Activated CD4-positive, alpha-beta T cell treated with anti-CD3 and anti-CD28 coated beads for 36 hours (primary cell): ENCODE measurements at regions of chr7 and their contacts with region 1.

Region 1: DNA sequence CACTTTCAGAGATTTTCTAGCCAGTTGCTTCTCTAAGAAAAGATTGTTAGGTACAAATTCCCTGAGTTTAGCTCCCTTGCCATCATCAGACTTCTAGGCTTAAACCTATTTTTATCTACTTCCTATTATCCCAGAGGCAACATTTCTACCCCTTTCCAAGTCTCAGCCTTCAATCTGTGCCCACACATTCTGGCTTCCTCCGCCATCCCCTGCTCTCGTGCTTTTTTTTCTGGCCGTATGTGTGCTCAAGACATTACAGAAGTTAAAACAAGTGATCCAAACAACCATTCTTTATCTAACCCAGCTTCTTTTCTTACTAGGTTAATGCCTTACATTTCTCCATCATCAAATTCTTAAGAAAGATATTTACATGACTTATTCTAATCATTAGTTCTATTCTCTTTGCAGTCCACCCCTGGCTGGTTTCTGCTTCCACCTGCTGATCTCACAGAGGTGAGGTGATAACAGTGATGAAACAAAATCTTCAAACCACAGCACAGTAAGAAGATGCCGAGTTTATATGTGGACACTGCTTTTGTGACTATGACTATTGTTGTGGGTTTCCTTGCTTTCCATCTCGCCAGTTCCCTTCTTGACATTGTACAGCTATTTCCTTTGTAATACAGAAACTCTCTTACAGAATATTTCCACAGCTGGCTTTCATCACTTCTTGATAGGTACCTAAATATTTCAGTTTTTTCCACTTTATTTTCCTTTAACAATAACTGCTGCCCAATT is 18.3 kb upstream of the CDK6 start:
- DNase-seq: peak; percentile 47
- ATAC-seq: peak; percentile 91
- H3K4me3 Mint-ChIP-seq: no peak overlapping the region
- H3K27ac Mint-ChIP-seq: peak overlapping the region; percentile 69
- H3K4me1 Mint-ChIP-seq: peaks cover 16% of the 10 kb centered on the region
- H3K27me3 Mint-ChIP-seq: peaks cover 6% of the 10 kb centered on the region

Region 2: DNA sequence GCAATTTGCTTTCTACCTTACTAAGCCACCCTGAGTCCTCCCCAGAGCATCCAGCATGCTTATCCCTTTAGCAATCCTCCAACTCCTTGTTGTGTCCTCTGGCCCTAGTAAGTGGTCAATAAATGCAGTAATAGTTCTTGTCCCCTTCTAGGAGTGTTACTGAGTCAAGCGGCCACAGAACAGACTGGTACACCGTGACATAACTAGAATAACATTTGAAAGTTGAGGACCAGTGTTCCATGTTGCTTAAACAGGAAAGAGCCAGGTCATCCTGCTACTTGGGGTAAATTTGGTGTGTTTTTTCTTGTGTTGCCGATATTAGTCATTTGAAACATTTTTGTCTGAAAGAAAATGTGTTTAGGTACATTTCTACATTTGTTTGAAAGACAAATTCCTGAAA is 13.5 kb before region 1 on chr7:
- CTCF ChIA-PET with region 1: interaction called, 8 read pairs
- POLR2A ChIA-PET with region 1: no interaction called
- intact Hi-C with region 1: loop called in 1 of 2 experiments (anchors 2 kb)
- DNase-seq: no peak
- ATAC-seq: no peak
- H3K4me3 Mint-ChIP-seq: no peak overlapping the region
- H3K27ac Mint-ChIP-seq: no peak overlapping the region
- H3K4me1 Mint-ChIP-seq: peaks cover 13% of the 10 kb centered on the region
- H3K27me3 Mint-ChIP-seq: peaks cover 20% of the 10 kb centered on the region

Region 3: DNA sequence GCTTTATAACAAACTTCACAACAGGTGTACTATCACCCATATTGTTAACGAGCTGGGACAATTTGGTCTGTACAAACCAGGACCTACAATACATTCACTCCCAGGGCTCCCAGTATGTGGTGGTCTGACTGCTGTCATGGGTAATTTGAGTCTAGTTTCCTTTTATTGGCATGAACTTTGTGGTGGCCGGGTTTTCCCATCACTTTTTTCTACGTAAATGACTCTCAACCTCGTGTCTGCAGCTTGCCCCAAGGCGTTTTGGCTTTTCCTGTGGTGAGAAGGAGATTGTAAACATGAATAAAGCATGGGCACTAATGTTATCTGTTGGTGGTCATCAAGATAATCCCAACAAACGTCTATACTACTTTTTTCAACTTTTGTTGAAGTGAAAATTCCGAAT is 100.4 kb after region 1 on chr7:
- CTCF ChIA-PET with region 1: no interaction called
- POLR2A ChIA-PET with region 1: no interaction called
- intact Hi-C with region 1: loop called in 1 of 2 experiments (anchors 5 kb)
- DNase-seq: peak; percentile 61
- ATAC-seq: peak; percentile 65
- H3K4me3 Mint-ChIP-seq: no peak overlapping the region
- H3K27ac Mint-ChIP-seq: peak overlapping the region; percentile 64
- H3K4me1 Mint-ChIP-seq: peaks cover 30% of the 10 kb centered on the region
- H3K27me3 Mint-ChIP-seq: peaks cover 20% of the 10 kb centered on the region